ENCODE measurements at regions of chr2 and their contacts with region 1.

Region 1: DNA sequence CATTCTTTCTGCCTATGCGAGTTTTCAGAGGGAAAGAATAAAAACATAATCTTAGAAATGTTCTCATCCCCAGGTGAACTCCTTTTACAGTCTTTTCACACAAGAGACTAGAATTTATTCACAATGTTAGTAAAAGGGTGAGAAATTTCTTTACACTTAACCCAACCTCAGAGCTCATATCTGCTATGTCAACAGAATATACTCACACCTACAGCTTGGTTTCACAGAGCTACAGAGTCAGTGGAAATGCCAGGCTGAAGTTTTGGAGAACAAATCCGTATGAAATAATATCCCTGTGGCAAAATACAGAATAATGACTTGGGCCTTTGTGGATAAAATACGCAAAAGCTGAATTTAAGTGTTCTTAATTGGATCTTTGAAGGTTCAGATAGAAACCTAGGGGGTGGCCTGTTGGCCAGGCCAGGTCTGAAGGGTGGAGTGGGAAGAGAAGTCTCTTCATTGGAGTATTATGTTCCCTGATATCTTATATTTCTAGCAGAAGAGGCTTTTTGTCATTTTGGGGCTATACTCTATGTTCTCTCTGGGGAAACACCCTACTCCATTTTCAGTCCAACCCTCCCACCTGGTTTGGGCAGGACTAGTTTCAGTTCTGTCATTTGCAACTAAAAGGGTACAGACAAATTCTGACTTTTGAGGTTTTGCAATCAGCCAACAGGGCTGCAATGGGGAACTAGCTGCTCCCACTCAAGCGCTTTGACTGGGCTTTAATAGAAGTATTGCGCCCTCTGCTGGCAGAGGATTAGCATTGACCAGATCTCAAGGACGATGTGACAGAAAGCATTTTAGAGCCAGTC is 25.7 kb downstream of the FBXO48 start:
- DNase-seq: peak; percentile 71
- H3K4me3 ChIP-seq: no peak overlapping the region
- H3K27ac ChIP-seq: no peak overlapping the region
- H3K4me1 ChIP-seq: no peaks in the 10 kb centered on the region
- H3K27me3 ChIP-seq: no peaks in the 10 kb centered on the region
- CTCF ChIP-seq: peak; percentile 82 to 86 (median 83)
- POLR2A ChIP-seq: no peak

Region 2: GRCh38 chr2:68121873-68122679 is 319.3 kb before region 1 on chr2:
- intact Hi-C with region 1: loop called (anchors 5 kb)
- DNase-seq: peak; percentile 83
- H3K4me3 ChIP-seq: no peak overlapping the region
- H3K27ac ChIP-seq: no peak overlapping the region
- H3K4me1 ChIP-seq: no peaks in the 10 kb centered on the region
- H3K27me3 ChIP-seq: no peaks in the 10 kb centered on the region
- CTCF ChIP-seq: peak; percentile 92 to 93 (median 93)
- POLR2A ChIP-seq: no peak

Region 3: DNA sequence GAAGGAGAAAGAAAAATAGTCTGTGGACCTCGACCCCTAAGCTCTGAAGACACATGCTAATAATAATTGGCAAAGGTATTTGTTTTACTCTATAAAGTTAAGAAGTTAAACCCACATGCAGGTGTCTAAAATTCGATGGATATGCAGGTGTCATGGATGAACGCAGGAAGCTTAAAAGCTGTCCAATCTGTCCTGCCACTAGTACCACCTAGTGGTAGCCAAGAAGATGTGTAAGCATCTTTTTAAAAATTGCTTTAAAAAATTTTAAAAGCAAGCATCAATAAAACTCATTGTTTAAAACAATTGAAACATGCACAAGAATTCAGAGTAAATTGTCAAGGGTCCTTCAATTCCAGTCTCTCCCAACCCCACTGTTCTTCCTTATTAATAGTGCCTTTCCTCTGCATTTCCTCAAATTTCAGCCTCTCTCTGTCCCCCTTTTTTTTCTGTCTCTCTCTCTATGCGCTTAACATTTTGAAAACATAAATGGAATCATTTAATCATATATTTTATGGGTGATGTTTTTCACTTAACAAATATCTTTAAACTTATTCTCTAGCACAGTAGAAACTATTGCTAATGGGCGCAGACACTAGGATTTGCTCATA is 158.5 kb before region 1 on chr2:
- intact Hi-C with region 1: loop called (anchors 10 kb)
- DNase-seq: peak; percentile 21
- H3K4me3 ChIP-seq: no peak overlapping the region
- H3K27ac ChIP-seq: no peak overlapping the region
- H3K4me1 ChIP-seq: peaks cover 8% of the 10 kb centered on the region
- H3K27me3 ChIP-seq: no peaks in the 10 kb centered on the region
- CTCF ChIP-seq: peak; percentile 39 to 76 (median 70)
- POLR2A ChIP-seq: no peak

Region 4: GRCh38 chr2:68362069-68362468 is 79.3 kb before region 1 on chr2:
- intact Hi-C with region 1: loop called (anchors 5 kb)
- DNase-seq: peak; percentile 58
- H3K4me3 ChIP-seq: no peak overlapping the region
- H3K27ac ChIP-seq: no peak overlapping the region
- H3K4me1 ChIP-seq: no peaks in the 10 kb centered on the region
- H3K27me3 ChIP-seq: no peaks in the 10 kb centered on the region
- CTCF ChIP-seq: peak; percentile 49 to 85 (median 70)
- POLR2A ChIP-seq: no peak

Measured in prostate gland (tissue), 2 donors.